ENCODE measurements at regions of chr13 and their contacts with region 1.

Region 1: GRCh38 chr13:99436686-99437416 is 64.4 kb upstream of the TM9SF2 start:
- DNase-seq: peak; percentile 99
- ATAC-seq: peak; percentile 47
- H3K4me3 Mint-ChIP-seq: peak overlapping the region; percentile 19
- H3K27ac Mint-ChIP-seq: peak overlapping the region; percentile 80
- H3K4me1 Mint-ChIP-seq: peaks cover 56% of the 10 kb centered on the region
- H3K27me3 Mint-ChIP-seq: peaks cover 2% of the 10 kb centered on the region
- CTCF ChIP-seq: peak; percentile 100

Region 2: DNA sequence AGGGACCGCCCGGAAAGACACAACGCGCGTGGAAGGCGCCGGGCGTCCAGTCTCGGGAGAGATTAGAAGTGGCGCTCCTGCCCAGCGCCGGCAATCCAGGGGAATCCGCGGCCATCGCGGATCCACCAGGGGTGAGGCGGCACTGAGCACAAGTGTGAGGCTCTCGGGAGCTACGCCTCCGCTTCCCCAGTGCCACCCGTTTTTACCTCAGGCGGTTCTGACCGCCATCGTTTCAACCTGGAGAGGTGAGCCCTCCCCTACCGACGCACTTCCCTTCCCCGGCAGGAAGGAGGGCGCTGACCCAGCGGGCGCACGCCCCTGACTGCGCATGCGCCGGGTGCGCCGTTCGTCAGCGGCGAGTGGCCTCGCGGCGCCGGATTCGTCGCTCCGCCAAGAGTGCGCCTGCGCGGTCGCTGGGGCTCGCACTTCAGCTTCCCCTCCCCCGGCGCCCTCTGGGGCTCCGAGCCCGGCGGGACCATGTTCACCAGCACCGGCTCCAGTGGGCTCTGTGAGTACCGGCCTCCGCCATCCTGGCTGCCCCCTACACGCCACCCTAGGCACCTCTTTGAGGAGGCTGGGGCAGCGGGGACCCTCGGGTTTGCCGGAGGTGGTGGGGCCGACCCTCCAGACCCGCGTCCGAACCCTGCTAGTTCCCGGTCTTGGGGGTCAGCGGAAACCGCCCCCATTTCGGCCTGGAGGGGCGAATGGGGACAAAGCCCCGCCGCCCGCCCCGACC is 236.3 kb before region 1 on chr13 and contains the start of gene UBAC2:
- CTCF ChIA-PET with region 1: interaction called, 15 read pairs
- POLR2A ChIA-PET with region 1: interaction called, 3 read pairs
- intact Hi-C with region 1: loop called (anchors 5 kb)
- DNase-seq: peak; percentile 95
- ATAC-seq: peak; percentile 79
- H3K4me3 Mint-ChIP-seq: peak within 1 kb of the TSS; percentile 92
- H3K27ac Mint-ChIP-seq: peak within 1 kb of the TSS; percentile 94
- H3K4me1 Mint-ChIP-seq: peaks cover 62% of the 10 kb centered on the region
- H3K27me3 Mint-ChIP-seq: no peaks in the 10 kb centered on the region
- CTCF ChIP-seq: no peak
- total RNA-seq, gene UBAC2: 63.7 to 68.4 TPM

Region 3: DNA sequence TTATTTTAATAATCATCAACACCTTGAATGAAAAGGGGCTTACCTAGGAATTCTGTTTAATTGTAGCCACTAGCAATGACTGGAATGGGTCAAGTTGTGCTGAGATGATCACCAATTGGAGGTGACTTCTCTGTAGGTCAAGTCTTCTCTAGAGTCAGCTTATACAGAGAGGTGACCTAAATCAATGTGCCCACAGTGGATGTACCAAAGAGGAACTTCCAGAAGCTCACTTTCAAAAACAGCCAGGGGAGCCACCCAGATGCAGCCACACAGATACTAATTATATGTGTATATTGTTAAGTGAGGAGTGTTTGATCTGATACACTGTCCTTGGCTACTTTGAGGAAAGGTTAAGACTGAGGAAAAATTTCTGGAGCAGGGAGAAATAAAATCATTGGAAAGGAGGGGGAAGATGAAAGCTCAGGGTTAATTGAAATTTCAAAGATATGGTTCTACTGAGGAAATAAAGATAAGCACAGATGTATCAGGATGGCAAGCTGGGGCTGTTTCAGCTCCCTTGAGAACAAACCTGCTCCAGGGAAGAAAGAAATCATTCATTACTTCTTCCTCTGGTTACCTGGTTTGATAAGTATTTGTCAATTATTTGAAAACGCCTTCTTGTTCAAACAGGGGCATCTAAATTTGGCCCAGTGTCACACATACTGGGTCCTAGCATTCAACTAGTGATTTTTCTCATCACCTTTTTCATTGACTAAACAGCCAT is 134.8 kb before region 1 on chr13:
- CTCF ChIA-PET with region 1: interaction called, 12 read pairs
- POLR2A ChIA-PET with region 1: interaction called, 5 read pairs
- intact Hi-C with region 1: loop called (anchors 10 kb)
- DNase-seq: no peak
- ATAC-seq: no peak
- H3K4me3 Mint-ChIP-seq: peak overlapping the region; percentile 2
- H3K27ac Mint-ChIP-seq: peak overlapping the region; percentile 78
- H3K4me1 Mint-ChIP-seq: peaks cover 80% of the 10 kb centered on the region
- H3K27me3 Mint-ChIP-seq: no peaks in the 10 kb centered on the region
- CTCF ChIP-seq: no peak

Region 4: DNA sequence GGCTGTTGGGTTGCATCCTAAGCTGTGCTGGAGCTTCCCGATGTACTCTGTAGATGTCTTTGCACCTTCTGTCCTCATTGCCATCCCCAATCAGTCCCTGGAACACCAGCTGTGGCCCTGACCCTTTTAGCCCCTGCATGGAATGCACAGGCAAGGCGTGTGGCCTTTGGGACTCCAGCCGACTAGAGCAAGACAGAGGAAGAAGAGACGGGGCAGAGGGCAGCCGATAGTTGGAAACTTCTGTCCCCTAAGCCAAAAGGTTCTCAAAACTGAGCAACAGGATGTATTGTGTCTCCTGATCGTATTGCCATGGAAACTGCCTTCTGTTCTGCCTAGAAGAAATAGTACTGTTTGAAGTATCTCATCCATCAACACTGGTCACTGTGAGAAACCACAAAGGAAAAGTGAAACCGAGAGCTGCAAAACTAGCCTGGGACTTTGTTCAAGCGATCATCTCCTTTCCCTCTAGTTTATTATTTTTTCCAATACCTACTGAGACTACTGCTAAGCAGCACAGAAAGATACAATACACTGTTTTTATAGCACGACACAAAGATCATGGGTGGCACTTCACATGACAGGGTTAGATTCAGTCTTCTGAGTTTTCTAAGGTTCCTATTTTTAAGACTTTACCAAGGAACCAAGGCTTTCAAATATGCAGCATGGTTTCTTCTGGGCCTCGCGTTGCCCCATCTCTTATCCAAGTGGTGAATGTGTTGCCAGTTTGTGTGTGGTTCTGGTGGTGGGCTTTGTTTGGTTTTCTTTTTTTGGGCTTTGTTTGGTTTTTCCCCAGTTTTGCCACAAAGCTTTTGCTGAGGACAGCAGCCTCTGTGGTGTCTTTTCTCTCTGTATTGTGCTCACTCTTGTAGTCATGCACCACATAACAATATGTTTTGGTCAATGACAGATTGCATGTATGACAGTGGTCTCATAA is 80.4 kb before region 1 on chr13:
- CTCF ChIA-PET with region 1: interaction called, 12 read pairs
- POLR2A ChIA-PET with region 1: interaction called, 6 read pairs
- intact Hi-C with region 1: no loop called
- DNase-seq: peak; percentile 71
- ATAC-seq: peak; percentile 53
- H3K4me3 Mint-ChIP-seq: peak overlapping the region; percentile 56
- H3K27ac Mint-ChIP-seq: peak overlapping the region; percentile 93
- H3K4me1 Mint-ChIP-seq: peaks cover 97% of the 10 kb centered on the region
- H3K27me3 Mint-ChIP-seq: no peaks in the 10 kb centered on the region
- CTCF ChIP-seq: no peak

Region 5: GRCh38 chr13:99386911-99387788 is 49.7 kb before region 1 on chr13:
- CTCF ChIA-PET with region 1: interaction called, 395 read pairs
- POLR2A ChIA-PET with region 1: interaction called, 38 read pairs
- intact Hi-C with region 1: loop called (anchors 1 kb)
- DNase-seq: peak; percentile 92
- ATAC-seq: peak; percentile 50
- H3K4me3 Mint-ChIP-seq: no peak overlapping the region
- H3K27ac Mint-ChIP-seq: peak overlapping the region; percentile 84
- H3K4me1 Mint-ChIP-seq: peaks cover 66% of the 10 kb centered on the region
- H3K27me3 Mint-ChIP-seq: no peaks in the 10 kb centered on the region
- CTCF ChIP-seq: peak; percentile 99

Region 6: DNA sequence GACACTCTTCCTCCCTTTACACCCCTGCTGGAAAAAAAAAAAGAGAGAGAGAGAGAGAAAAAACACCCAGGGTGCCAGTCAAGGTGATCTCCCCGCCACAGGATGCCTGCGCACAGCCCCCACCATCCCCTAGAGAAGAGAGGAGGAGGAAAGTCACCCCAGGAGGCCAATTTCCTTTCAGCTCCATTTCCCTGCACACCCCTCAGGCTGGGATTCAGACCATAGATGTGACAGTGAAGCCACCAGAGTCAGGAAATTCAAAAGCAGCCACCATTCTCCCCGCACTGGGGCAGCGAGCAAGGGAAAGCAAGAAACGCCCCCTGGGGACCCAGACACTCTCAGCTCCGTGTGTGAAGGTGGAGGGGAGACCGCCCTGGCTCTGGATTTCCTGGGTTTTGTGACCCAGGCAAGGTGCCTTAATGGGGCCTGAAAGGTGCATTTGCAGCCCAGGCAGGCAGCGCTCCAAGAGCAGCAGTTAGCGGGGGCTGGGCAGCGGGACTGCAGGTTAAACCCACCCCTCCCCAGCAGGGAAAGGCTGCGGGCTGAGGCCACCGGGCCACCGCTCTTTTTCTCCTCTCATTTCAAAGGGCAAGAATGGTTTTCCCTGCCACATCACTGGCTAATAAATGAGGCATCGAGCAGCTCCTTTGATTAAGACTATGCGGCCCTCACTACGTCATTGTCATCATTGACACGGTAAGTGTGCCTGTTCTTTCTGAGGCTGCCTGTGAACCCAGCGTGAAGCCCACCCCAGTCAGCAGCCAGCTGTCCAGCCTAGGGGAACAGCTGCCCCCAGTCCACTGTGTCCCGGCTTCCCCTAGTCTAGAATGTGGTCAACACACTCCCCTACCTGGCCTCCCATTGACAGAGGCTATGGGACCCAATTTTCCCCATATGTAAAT is 19.4 kb before region 1 on chr13:
- CTCF ChIA-PET with region 1: interaction called, 162 read pairs
- POLR2A ChIA-PET with region 1: interaction called, 27 read pairs
- intact Hi-C with region 1: loop called (anchors 2 kb)
- DNase-seq: peak; percentile 55
- ATAC-seq: no peak
- H3K4me3 Mint-ChIP-seq: no peak overlapping the region
- H3K27ac Mint-ChIP-seq: no peak overlapping the region
- H3K4me1 Mint-ChIP-seq: peaks cover 64% of the 10 kb centered on the region
- H3K27me3 Mint-ChIP-seq: no peaks in the 10 kb centered on the region
- CTCF ChIP-seq: no peak

Region 7: DNA sequence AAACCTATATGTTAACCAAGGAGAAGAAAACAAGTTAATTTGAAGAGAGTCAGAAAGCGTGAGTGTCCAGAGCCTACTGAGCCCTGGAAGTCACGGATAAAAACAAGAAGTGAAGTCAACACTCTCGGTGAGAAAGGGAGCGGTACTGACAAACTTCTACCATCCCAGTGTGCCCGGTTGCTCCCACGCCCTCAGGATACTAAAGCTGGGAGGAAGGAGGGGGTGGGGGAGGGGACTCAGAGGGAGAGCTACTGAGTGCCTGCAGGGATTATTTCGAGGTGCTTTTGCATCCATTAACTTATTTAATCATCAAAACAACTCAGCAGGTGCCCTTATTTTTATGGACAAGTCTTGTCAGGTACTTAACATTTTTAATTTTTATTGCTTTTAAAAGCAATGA is 368.5 kb after region 1 on chr13:
- CTCF ChIA-PET with region 1: no interaction called
- POLR2A ChIA-PET with region 1: no interaction called
- intact Hi-C with region 1: no loop called
- DNase-seq: no peak
- ATAC-seq: no peak
- H3K4me3 Mint-ChIP-seq: no peak overlapping the region
- H3K27ac Mint-ChIP-seq: no peak overlapping the region
- H3K4me1 Mint-ChIP-seq: no peaks in the 10 kb centered on the region
- H3K27me3 Mint-ChIP-seq: no peaks in the 10 kb centered on the region
- CTCF ChIP-seq: no peak